Calu3 (cell line): ENCODE measurements at regions of chr1 and their contacts with region 1.

Region 1: GRCh38 chr1:171494076-171494475 is 8.7 kb downstream of the PRRC2C start:
- DNase-seq: no peak
- H3K4me3 Mint-ChIP-seq: no peak overlapping the region
- H3K27ac Mint-ChIP-seq: no peak overlapping the region
- H3K4me1 Mint-ChIP-seq: peaks cover 65% of the 10 kb centered on the region
- H3K27me3 Mint-ChIP-seq: no peaks in the 10 kb centered on the region
- CTCF ChIP-seq: no peak

Region 2: DNA sequence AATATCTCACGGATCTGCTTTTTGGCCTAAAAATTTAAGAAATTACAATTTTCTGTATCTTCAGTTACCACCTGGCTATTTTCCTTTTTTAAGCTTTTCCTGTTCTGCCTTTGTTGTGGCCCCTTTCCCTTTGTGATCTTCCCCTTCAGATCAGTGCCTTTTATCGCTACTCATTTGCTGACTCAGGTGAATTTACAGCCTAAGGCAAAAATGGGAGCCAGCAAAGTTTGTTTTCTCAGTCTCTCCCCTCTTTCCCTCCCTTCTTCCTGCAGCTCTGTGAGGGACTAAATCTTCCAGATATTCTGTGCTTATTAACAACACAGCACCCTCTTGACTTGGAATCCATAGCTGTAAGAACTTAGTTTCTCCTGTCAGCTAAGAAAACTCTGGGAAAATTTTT is 14.0 kb before region 1 on chr1:
- CTCF ChIA-PET with region 1: no interaction called
- intact Hi-C with region 1: no loop called
- DNase-seq: no peak
- H3K4me3 Mint-ChIP-seq: no peak overlapping the region
- H3K27ac Mint-ChIP-seq: no peak overlapping the region
- H3K4me1 Mint-ChIP-seq: peaks cover 9% of the 10 kb centered on the region
- H3K27me3 Mint-ChIP-seq: no peaks in the 10 kb centered on the region
- CTCF ChIP-seq: no peak

Region 3: GRCh38 chr1:171509191-171509590 is 15.1 kb after region 1 on chr1:
- CTCF ChIA-PET with region 1: interaction called, 4 read pairs
- intact Hi-C with region 1: loop called (anchors 2 kb)
- DNase-seq: no peak
- H3K4me3 Mint-ChIP-seq: no peak overlapping the region
- H3K27ac Mint-ChIP-seq: no peak overlapping the region
- H3K4me1 Mint-ChIP-seq: peaks cover 42% of the 10 kb centered on the region
- H3K27me3 Mint-ChIP-seq: no peaks in the 10 kb centered on the region
- CTCF ChIP-seq: no peak

Region 4: GRCh38 chr1:171623651-171624331 is 129.7 kb after region 1 on chr1:
- CTCF ChIA-PET with region 1: no interaction called
- intact Hi-C with region 1: no loop called
- DNase-seq: no peak
- H3K4me3 Mint-ChIP-seq: no peak overlapping the region
- H3K27ac Mint-ChIP-seq: no peak overlapping the region
- H3K4me1 Mint-ChIP-seq: no peaks in the 10 kb centered on the region
- H3K27me3 Mint-ChIP-seq: peaks cover 6% of the 10 kb centered on the region
- CTCF ChIP-seq: no peak